ENCODE measurements at regions of chr6 and their contacts with region 1.

Region 1: GRCh38 chr6:9412951-9413559 is 977.7 kb upstream of the SLC35B3 start:
- DNase-seq: peak; percentile 29
- H3K4me3 ChIP-seq: no peak overlapping the region
- H3K27ac ChIP-seq: no peak overlapping the region
- H3K4me1 ChIP-seq: no peaks in the 10 kb centered on the region
- CTCF ChIP-seq: peak; percentile 82

Region 2: DNA sequence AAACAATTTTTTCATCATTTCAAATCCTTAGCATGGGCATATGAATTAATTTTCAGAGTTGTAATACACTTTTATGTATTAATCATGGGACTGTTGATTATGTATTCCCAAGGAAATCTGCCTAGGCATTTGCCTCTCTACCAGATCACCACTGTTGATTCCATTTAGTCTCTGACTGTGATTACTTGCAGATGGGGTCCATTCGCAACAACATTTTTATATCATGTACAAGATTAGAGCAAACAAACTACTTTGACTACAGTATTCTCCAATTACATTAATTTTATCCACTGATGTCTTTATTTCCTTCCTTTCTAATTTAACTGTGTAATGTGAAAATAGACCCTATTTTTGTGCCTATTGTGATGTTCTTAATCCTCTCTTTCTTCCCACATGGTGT is 146.3 kb before region 1 on chr6:
- CTCF ChIA-PET with region 1: no interaction called
- POLR2A ChIA-PET with region 1: no interaction called
- intact Hi-C with region 1: no loop called
- DNase-seq: no peak
- H3K4me3 ChIP-seq: no peak overlapping the region
- H3K27ac ChIP-seq: no peak overlapping the region
- H3K4me1 ChIP-seq: no peaks in the 10 kb centered on the region
- CTCF ChIP-seq: no peak

Region 3: GRCh38 chr6:9428421-9429172 is 15.5 kb after region 1 on chr6:
- CTCF ChIA-PET with region 1: no interaction called
- POLR2A ChIA-PET with region 1: interaction called, 10 read pairs
- intact Hi-C with region 1: no loop called
- DNase-seq: no peak
- H3K4me3 ChIP-seq: no peak overlapping the region
- H3K27ac ChIP-seq: no peak overlapping the region
- H3K4me1 ChIP-seq: no peaks in the 10 kb centered on the region
- CTCF ChIP-seq: no peak

Measured in OCI-LY7 (cell line).